Vagina (tissue), 2 donors: ENCODE measurements at regions of chr11 and their contacts with region 1.

Region 1: GRCh38 chr11:86456052-86456939 is 81.6 kb downstream of the CCDC81 start:
- DNase-seq: no peak
- H3K4me3 ChIP-seq: no peak overlapping the region
- H3K27ac ChIP-seq: peak overlapping the region; percentile 32
- H3K4me1 ChIP-seq: peaks cover 43% of the 10 kb centered on the region
- H3K27me3 ChIP-seq: no peaks in the 10 kb centered on the region
- CTCF ChIP-seq: peak; percentile 73 to 95 (median 91)
- POLR2A ChIP-seq: no peak

Region 2: DNA sequence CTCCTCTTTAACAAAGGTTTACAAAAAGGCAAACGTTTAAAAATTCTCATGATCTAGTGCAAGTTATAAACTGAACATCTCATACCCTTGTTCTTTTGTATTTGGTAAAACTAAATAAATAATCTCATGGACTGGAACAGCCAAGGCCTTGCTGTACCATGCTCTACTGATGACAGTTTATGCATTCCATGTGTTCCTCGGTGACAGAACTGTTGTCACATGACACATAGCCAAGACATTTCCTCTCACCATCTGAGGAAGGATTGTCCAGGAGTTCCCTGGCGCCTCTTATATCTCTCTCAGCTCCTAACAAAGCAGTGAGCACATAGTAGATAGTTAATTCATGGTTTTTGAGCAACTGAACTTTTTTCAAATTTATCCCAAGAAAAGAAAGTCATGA is 588.5 kb before region 1 on chr11:
- intact Hi-C with region 1: no loop called
- DNase-seq: no peak
- H3K4me3 ChIP-seq: no peak overlapping the region
- H3K27ac ChIP-seq: no peak overlapping the region
- H3K4me1 ChIP-seq: no peaks in the 10 kb centered on the region
- H3K27me3 ChIP-seq: no peaks in the 10 kb centered on the region
- CTCF ChIP-seq: no peak
- POLR2A ChIP-seq: no peak

Region 3: GRCh38 chr11:86608251-86608799 is 152.0 kb after region 1 on chr11:
- intact Hi-C with region 1: loop called (anchors 5 kb)
- DNase-seq: no peak
- H3K4me3 ChIP-seq: no peak overlapping the region
- H3K27ac ChIP-seq: peak overlapping the region; percentile 70
- H3K4me1 ChIP-seq: peaks cover 26% of the 10 kb centered on the region
- H3K27me3 ChIP-seq: no peaks in the 10 kb centered on the region
- CTCF ChIP-seq: peak; percentile 67 to 89 (median 73)
- POLR2A ChIP-seq: no peak

Region 4: DNA sequence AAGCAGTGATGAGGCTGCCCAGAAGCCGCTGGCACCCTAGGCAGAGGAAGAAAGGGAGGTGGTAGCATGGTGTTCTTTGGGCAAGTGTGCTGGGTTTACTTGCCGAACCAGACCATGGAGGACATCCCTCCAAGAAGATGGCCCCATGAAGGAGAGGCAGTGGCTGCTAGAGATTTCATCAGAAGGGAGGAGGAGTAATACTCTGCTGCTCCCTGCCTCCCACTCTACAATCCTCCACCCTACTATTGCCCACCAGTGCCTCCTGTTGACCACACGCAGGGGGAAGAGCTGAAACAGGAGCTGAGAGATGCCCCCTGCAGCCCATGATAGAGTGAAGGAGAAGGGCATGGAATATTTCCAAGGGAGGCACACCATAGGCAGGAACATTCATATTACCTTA is 293.1 kb after region 1 on chr11:
- intact Hi-C with region 1: no loop called
- DNase-seq: no peak
- H3K4me3 ChIP-seq: no peak overlapping the region
- H3K27ac ChIP-seq: peak overlapping the region; percentile 55
- H3K4me1 ChIP-seq: peaks cover 9% of the 10 kb centered on the region
- H3K27me3 ChIP-seq: no peaks in the 10 kb centered on the region
- CTCF ChIP-seq: no peak
- POLR2A ChIP-seq: no peak

Region 5: GRCh38 chr11:86818466-86819192 is 362.3 kb after region 1 on chr11:
- intact Hi-C with region 1: loop called (anchors 5 kb)
- DNase-seq: no peak
- H3K4me3 ChIP-seq: no peak overlapping the region
- H3K27ac ChIP-seq: peak overlapping the region; percentile 9
- H3K4me1 ChIP-seq: peaks cover 53% of the 10 kb centered on the region
- H3K27me3 ChIP-seq: no peaks in the 10 kb centered on the region
- CTCF ChIP-seq: peak; percentile 62 to 82 (median 78)
- POLR2A ChIP-seq: no peak